Activated CD4-positive, alpha-beta T cell treated with anti-CD3 and anti-CD28 coated beads for 36 hours (primary cell): ENCODE measurements at regions of chrX and their contacts with region 1.

Region 1: GRCh38 chrX:47854474-47854873 is 17.8 kb downstream of the ZNF81 start:
- DNase-seq: peak; percentile 43
- ATAC-seq: peak; percentile 47
- H3K4me3 Mint-ChIP-seq: no peak overlapping the region
- H3K27ac Mint-ChIP-seq: no peak overlapping the region
- H3K4me1 Mint-ChIP-seq: peaks cover 7% of the 10 kb centered on the region
- H3K27me3 Mint-ChIP-seq: no peaks in the 10 kb centered on the region

Region 2: DNA sequence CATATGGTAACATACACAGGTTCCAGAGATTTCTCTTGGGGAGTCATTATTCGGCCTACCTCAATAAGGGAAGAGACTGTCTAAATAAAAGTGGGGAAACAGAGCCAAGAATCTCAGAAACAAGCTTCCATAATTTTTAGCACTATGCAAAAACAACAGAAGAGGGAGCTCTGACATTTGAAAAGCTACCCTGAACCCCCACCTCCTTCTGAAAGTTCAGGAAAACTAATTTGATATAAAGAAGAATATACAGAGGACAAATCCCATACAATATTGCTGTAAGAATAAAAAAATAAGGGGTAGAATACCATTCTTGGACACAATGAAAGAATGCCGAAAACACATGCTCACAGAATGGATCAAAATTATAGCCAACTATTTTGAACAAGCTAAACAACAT is 357.2 kb before region 1 on chrX:
- CTCF ChIA-PET with region 1: no interaction called
- POLR2A ChIA-PET with region 1: no interaction called
- intact Hi-C with region 1: no loop called
- DNase-seq: no peak
- ATAC-seq: no peak
- H3K4me3 Mint-ChIP-seq: no peak overlapping the region
- H3K27ac Mint-ChIP-seq: no peak overlapping the region
- H3K4me1 Mint-ChIP-seq: no peaks in the 10 kb centered on the region
- H3K27me3 Mint-ChIP-seq: no peaks in the 10 kb centered on the region

Region 3: DNA sequence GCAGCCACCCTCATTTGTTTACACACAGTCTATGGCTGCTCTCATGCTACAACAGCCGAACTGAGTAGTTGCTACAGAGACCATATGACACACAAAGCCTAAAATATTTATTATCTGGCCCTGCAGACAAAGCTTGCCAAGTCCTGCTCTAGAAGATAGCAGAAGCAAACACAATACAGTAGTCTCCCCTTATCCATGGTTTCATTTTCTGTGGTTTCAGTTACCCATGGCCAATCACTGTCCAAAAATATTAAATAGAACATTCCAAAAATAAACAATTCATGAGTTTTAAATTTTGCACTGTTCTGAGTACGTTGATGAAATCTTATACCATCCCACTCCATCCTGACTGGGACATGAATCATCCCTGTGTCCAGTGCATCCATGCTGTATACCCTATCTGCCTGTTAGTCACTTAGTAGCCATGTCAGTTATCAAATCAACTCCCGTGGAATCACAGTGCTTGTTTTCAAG is 58.0 kb before region 1 on chrX:
- CTCF ChIA-PET with region 1: no interaction called
- POLR2A ChIA-PET with region 1: no interaction called
- intact Hi-C with region 1: no loop called
- DNase-seq: no peak
- ATAC-seq: no peak
- H3K4me3 Mint-ChIP-seq: no peak overlapping the region
- H3K27ac Mint-ChIP-seq: no peak overlapping the region
- H3K4me1 Mint-ChIP-seq: no peaks in the 10 kb centered on the region
- H3K27me3 Mint-ChIP-seq: no peaks in the 10 kb centered on the region

Region 4: GRCh38 chrX:48028091-48028490 is 173.6 kb after region 1 on chrX:
- CTCF ChIA-PET with region 1: interaction called, 11 read pairs
- POLR2A ChIA-PET with region 1: no interaction called
- intact Hi-C with region 1: loop called (anchors 1 kb)
- DNase-seq: no peak
- ATAC-seq: no peak
- H3K4me3 Mint-ChIP-seq: no peak overlapping the region
- H3K27ac Mint-ChIP-seq: no peak overlapping the region
- H3K4me1 Mint-ChIP-seq: peaks cover 6% of the 10 kb centered on the region
- H3K27me3 Mint-ChIP-seq: no peaks in the 10 kb centered on the region